ENCODE measurements at regions of chrX and their contacts with region 1.

Region 1: GRCh38 chrX:2811271-2811670 is 17.5 kb upstream of the GYG2 start:
- DNase-seq: no peak
- ATAC-seq: no peak
- H3K4me3 ChIP-seq: no peak overlapping the region
- H3K27ac ChIP-seq: no peak overlapping the region
- H3K4me1 ChIP-seq: peaks cover 0 to 4% (median 0%) of the 10 kb centered on the region in 12 donors
- H3K27me3 ChIP-seq: peaks cover 0 to 15% (median 0%) of the 10 kb centered on the region in 9 donors
- CTCF ChIP-seq: no peak
- POLR2A ChIP-seq: no peak

Region 2: DNA sequence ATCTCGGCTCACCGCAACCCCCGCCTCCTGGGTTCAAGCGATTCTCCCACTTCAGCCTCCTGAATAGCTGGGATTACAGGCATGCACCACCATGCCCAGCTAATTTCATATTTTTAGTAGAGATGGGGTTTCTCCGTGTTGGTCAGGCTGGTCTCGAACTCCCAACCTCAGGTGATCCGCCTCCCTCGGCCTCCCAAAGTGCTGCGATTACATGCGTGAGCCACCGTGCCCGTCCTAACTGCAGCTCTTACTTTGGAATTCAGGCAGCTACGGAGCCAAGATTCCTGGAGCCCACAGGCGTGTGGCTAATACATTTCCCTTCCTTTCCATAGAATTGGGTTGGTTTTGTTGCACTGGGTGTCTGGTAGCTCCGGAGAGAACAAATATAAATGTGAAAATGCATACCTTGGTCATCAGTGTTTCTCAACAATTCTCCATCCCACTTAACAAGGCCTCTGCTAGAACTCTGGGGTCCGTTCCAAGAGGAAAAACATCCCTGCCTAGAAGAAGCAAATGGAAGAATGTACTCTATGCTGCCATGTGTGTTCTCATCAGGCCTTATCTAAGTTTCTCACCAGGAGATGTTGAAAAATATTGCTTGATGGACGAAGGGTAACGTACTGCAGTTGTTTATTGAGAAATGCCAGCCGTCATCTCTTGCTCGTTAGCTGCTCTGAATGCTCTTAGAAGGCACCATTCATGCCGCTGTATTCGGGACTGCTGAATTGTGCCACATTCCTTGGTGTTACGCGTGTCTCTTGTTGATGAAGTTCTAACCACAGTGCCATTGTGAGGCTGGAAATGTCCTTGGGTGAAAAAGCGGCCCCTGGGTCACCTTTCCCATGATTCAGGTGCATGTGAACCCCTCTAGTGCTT is 170.8 kb before region 1 on chrX:
- intact Hi-C with region 1: loop called in 9 of 10 experiments (anchors 1 to 10 kb)
- DNase-seq: no peak
- ATAC-seq: no peak
- H3K4me3 ChIP-seq: no peak overlapping the region
- H3K27ac ChIP-seq: no peak overlapping the region
- H3K4me1 ChIP-seq: no peaks in the 10 kb centered on the region
- H3K27me3 ChIP-seq: no peaks in the 10 kb centered on the region
- CTCF ChIP-seq: no peak
- POLR2A ChIP-seq: no peak

Region 3: DNA sequence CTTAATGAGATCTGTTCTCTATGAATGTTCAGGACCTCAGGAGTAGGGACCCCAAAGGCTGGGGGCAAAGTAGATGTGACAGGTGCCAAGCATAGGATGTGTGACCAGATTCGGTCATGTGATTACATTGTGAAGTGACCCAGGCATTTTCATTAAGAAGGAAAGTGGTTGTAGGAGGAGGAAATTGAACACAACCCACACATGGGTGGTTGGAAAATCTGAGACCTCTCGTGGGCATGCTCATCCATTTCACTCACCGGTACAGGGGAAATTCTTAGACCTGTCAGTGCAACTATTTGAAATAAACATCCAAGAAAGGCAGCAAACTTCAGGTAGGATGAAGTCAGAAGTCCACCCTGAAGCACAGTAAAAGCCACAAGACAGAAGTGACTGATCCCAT is 163.6 kb before region 1 on chrX:
- intact Hi-C with region 1: loop called in 9 of 10 experiments (anchors 1 to 10 kb)
- DNase-seq: no peak
- ATAC-seq: no peak
- H3K4me3 ChIP-seq: no peak overlapping the region
- H3K27ac ChIP-seq: no peak overlapping the region
- H3K4me1 ChIP-seq: no peaks in the 10 kb centered on the region
- H3K27me3 ChIP-seq: no peaks in the 10 kb centered on the region
- CTCF ChIP-seq: no peak
- POLR2A ChIP-seq: no peak

Region 4: DNA sequence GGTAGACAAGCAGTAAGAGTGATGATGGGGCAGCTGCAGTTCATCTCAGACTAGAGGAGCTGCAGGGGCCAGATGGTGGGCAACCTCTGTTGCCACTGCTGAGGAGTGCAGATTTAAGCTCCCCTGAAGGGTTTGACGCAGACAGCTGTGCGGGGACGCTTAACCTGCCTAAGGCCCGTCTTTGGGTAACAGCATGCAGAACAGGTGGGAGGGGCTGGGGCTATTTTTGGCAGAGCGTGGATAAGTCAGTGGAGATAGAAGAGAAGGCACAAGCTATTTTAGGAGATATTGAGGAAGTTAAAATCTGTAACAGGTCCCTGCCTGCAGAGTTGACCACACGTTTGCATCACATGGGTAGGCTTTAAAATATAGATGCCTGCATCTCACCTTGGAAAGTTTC is 109.7 kb before region 1 on chrX:
- intact Hi-C with region 1: loop called in 2 of 10 experiments (anchors 5 to 10 kb)
- DNase-seq: peak in 4 of 5 donors; percentile 44 to 82 (median 60)
- ATAC-seq: peak; percentile 64 to 84 (median 72)
- H3K4me3 ChIP-seq: no peak overlapping the region
- H3K27ac ChIP-seq: peak overlapping the region in 11 of 12 donors; percentile 10 to 81 (median 54)
- H3K4me1 ChIP-seq: peaks cover 22 to 97% (median 80%) of the 10 kb centered on the region in 12 donors
- H3K27me3 ChIP-seq: no peaks in the 10 kb centered on the region
- CTCF ChIP-seq: no peak
- POLR2A ChIP-seq: no peak

Region 5: GRCh38 chrX:2801223-2801622 is 10.0 kb before region 1 on chrX:
- intact Hi-C with region 1: no loop called
- DNase-seq: no peak
- ATAC-seq: no peak
- H3K4me3 ChIP-seq: no peak overlapping the region
- H3K27ac ChIP-seq: no peak overlapping the region
- H3K4me1 ChIP-seq: peaks cover 0 to 2% (median 0%) of the 10 kb centered on the region in 12 donors
- H3K27me3 ChIP-seq: no peaks in the 10 kb centered on the region
- CTCF ChIP-seq: no peak
- POLR2A ChIP-seq: no peak